Activated CD4-positive, alpha-beta memory T cell treated with anti-CD3 and anti-CD28 coated beads for 36 hours (primary cell): ENCODE measurements at regions of chr12 and their contacts with region 1.

Region 1: GRCh38 chr12:104381731-104382480 is 74.8 kb upstream of the CHST11 start:
- DNase-seq: peak; percentile 87
- H3K4me3 Mint-ChIP-seq: no peak overlapping the region
- H3K27ac Mint-ChIP-seq: no peak overlapping the region
- H3K4me1 Mint-ChIP-seq: peaks cover 15% of the 10 kb centered on the region
- H3K27me3 Mint-ChIP-seq: peaks cover 3% of the 10 kb centered on the region

Region 2: GRCh38 chr12:104083769-104084475 is 298.0 kb before region 1 on chr12:
- CTCF ChIA-PET with region 1: no interaction called
- POLR2A ChIA-PET with region 1: no interaction called
- intact Hi-C with region 1: no loop called
- DNase-seq: peak; percentile 78
- H3K4me3 Mint-ChIP-seq: no peak overlapping the region
- H3K27ac Mint-ChIP-seq: no peak overlapping the region
- H3K4me1 Mint-ChIP-seq: peaks cover 17% of the 10 kb centered on the region
- H3K27me3 Mint-ChIP-seq: no peaks in the 10 kb centered on the region

Region 3: GRCh38 chr12:104334581-104334980 is 47.3 kb before region 1 on chr12:
- CTCF ChIA-PET with region 1: no interaction called
- POLR2A ChIA-PET with region 1: no interaction called
- intact Hi-C with region 1: no loop called
- DNase-seq: no peak
- H3K4me3 Mint-ChIP-seq: no peak overlapping the region
- H3K27ac Mint-ChIP-seq: no peak overlapping the region
- H3K4me1 Mint-ChIP-seq: no peaks in the 10 kb centered on the region
- H3K27me3 Mint-ChIP-seq: no peaks in the 10 kb centered on the region

Region 4: GRCh38 chr12:104456417-104456949 is 74.6 kb after region 1 on chr12 and contains the start of gene CHST11:
- CTCF ChIA-PET with region 1: interaction called, 20 read pairs
- POLR2A ChIA-PET with region 1: interaction called, 4 read pairs
- intact Hi-C with region 1: loop called (anchors 5 kb)
- DNase-seq: peak; percentile 89
- H3K4me3 Mint-ChIP-seq: peak within 1 kb of the TSS; percentile 99
- H3K27ac Mint-ChIP-seq: peak within 1 kb of the TSS; percentile 97
- H3K4me1 Mint-ChIP-seq: peaks cover 29% of the 10 kb centered on the region
- H3K27me3 Mint-ChIP-seq: no peaks in the 10 kb centered on the region
- total RNA-seq, gene CHST11: 58.3 to 59.0 TPM

Region 5: GRCh38 chr12:104604070-104604994 is 222.4 kb after region 1 on chr12:
- CTCF ChIA-PET with region 1: interaction called, 16 read pairs
- POLR2A ChIA-PET with region 1: no interaction called
- intact Hi-C with region 1: no loop called
- DNase-seq: peak; percentile 81
- H3K4me3 Mint-ChIP-seq: peak overlapping the region; percentile 19
- H3K27ac Mint-ChIP-seq: peak overlapping the region; percentile 92
- H3K4me1 Mint-ChIP-seq: peaks cover 47% of the 10 kb centered on the region
- H3K27me3 Mint-ChIP-seq: no peaks in the 10 kb centered on the region

Region 6: GRCh38 chr12:104720339-104721038 is 338.6 kb after region 1 on chr12:
- CTCF ChIA-PET with region 1: interaction called, 4 read pairs
- POLR2A ChIA-PET with region 1: interaction called, 3 read pairs
- intact Hi-C with region 1: loop called (anchors 10 kb)
- DNase-seq: peak; percentile 78
- H3K4me3 Mint-ChIP-seq: peak overlapping the region; percentile 74
- H3K27ac Mint-ChIP-seq: peak overlapping the region; percentile 89
- H3K4me1 Mint-ChIP-seq: peaks cover 39% of the 10 kb centered on the region
- H3K27me3 Mint-ChIP-seq: no peaks in the 10 kb centered on the region

Region 7: DNA sequence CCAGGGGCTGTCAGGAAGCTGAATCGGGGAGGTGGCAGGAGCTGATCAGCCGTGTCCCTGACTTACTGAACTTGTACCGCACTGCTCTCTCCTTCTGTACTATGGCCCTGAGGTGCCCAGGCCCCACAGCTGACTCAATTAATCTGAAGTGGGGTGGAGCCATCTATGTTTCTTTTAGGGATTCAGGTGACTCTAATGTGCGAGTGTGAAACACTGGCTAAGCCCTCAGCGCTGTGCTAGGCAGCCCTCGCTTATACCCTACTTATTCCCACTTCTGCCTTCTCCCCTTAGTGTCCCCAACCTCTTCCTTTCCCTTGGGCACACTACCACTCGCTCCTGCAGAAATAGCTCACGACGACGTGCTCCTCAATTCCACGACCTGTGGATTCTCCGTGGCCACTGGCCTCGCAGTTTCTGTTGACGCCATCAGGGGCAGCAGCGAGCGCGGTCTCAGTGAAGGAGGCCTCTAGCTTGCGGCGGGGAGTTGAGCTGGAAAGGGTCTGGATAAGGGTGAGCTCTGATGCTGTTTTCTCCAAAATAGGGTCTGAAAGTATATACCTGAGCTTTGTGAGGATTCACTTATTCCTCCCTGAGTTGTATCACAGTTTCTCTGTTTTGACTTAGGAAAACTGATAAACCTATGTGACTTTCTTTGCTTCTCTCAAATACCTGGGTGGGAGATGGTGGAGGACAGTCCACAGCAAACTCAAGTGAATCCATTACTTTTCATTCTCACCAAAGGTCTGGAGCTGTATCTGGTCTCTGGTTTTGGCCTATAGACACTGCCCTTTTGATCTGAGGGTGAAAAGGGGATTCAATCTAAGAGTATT is 408.6 kb after region 1 on chr12:
- CTCF ChIA-PET with region 1: interaction called, 10 read pairs
- POLR2A ChIA-PET with region 1: no interaction called
- intact Hi-C with region 1: no loop called
- DNase-seq: peak; percentile 59
- H3K4me3 Mint-ChIP-seq: no peak overlapping the region
- H3K27ac Mint-ChIP-seq: no peak overlapping the region
- H3K4me1 Mint-ChIP-seq: peaks cover 2% of the 10 kb centered on the region
- H3K27me3 Mint-ChIP-seq: peaks cover 3% of the 10 kb centered on the region

Region 8: GRCh38 chr12:104870797-104871196 is 488.9 kb after region 1 on chr12:
- CTCF ChIA-PET with region 1: interaction called, 20 read pairs
- POLR2A ChIA-PET with region 1: no interaction called
- intact Hi-C with region 1: no loop called
- DNase-seq: no peak
- H3K4me3 Mint-ChIP-seq: no peak overlapping the region
- H3K27ac Mint-ChIP-seq: no peak overlapping the region
- H3K4me1 Mint-ChIP-seq: peaks cover 3% of the 10 kb centered on the region
- H3K27me3 Mint-ChIP-seq: no peaks in the 10 kb centered on the region

Region 9: DNA sequence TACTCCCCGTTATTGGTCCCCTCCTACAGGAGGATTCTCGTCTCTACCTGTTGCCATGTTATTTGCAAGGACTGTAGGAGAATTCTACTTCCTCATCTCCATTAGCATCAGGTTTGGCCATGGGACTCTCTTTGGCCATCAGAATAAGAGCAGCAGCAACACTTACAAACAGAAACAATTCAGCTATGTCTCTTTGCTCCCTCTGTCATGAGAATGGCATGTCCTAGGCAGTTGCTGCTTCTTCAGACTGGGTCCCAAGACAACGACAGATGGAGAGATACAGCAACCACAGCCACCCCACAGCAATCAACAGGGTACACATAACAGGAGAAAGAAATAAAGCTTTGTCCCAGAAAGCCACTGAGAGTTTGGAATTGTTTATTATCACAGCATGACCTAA is 556.5 kb after region 1 on chr12:
- CTCF ChIA-PET with region 1: no interaction called
- POLR2A ChIA-PET with region 1: no interaction called
- intact Hi-C with region 1: no loop called
- DNase-seq: no peak
- H3K4me3 Mint-ChIP-seq: no peak overlapping the region
- H3K27ac Mint-ChIP-seq: no peak overlapping the region
- H3K4me1 Mint-ChIP-seq: no peaks in the 10 kb centered on the region
- H3K27me3 Mint-ChIP-seq: no peaks in the 10 kb centered on the region

Region 10: DNA sequence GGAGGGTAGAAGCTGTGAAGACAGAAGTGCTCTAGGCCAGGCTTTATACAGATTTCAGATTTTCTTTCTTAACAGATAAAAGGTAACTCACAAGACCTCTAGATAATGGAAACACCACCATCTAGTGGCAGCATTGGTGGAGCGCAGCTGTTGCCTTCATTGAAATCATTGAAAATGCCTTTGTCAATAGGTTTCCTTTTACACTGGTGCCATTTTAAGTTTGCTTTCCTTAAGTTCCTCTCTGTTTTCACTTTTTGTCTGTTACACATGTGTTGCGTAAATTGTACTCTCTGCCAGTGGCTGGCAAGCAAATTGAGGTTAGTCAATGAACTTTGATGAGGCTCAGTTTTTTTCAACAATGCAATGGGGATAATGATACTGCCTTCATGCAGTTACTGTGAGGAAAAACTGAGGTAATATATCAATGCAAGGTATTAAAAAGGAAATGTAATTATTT is 671.2 kb after region 1 on chr12:
- CTCF ChIA-PET with region 1: interaction called, 81 read pairs
- POLR2A ChIA-PET with region 1: no interaction called
- intact Hi-C with region 1: loop called (anchors 1 kb)
- DNase-seq: peak; percentile 87
- H3K4me3 Mint-ChIP-seq: no peak overlapping the region
- H3K27ac Mint-ChIP-seq: no peak overlapping the region
- H3K4me1 Mint-ChIP-seq: peaks cover 5% of the 10 kb centered on the region
- H3K27me3 Mint-ChIP-seq: no peaks in the 10 kb centered on the region